ENCODE measurements at regions of chr15 and their contacts with region 1.

Region 1: GRCh38 chr15:53251996-53252395 is 461.9 kb upstream of the ONECUT1 start:
- ATAC-seq: peak in 4 of 8 experiments; percentile 24 to 40 (median 26)
- H3K4me3 ChIP-seq: no peak overlapping the region
- H3K27ac ChIP-seq: no peak overlapping the region
- H3K4me1 ChIP-seq: peaks cover 6 to 10% of the 10 kb centered on the region in 2 donors

Region 2: GRCh38 chr15:53351373-53351772 is 99.4 kb after region 1 on chr15:
- in situ Hi-C with region 1: loop called in 1 of 9 experiments (anchors 25 kb)
- ATAC-seq: no peak
- H3K4me3 ChIP-seq: no peak overlapping the region
- H3K27ac ChIP-seq: no peak overlapping the region
- H3K4me1 ChIP-seq: peaks cover 12 to 18% of the 10 kb centered on the region in 2 donors